Activated CD4-positive, alpha-beta T cell treated with anti-CD3 and anti-CD28 coated beads for 36 hours (primary cell): ENCODE measurements at regions of chr3 and their contacts with region 1.

Region 1: DNA sequence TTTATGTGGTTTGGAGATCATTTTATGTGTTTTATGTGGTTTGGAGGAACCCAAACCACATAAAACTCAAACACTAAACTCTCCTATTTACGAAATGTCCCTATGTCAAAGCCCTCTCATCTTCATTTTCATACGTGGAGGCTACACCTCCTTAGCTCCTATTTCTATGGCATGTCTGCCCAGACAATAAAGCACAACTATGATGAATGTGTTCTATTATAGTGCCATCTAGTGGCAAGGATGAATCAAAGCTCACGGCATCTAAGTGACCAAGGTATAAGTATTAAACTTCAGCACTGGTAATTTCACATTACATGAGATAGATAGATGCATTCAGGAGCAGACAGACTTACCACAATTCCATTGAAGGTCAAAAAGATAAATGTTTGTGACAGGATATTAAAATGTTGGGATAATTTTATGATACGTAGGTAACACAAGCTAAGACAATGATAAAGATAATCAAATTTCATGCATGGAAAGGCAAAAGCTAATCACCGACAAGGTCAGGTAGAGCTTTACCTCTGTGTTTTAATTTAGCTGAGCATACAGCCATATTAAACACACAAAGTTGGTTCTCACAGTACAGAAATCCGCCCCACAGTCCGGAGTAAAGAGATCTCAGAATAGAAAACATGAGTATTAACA is 130.6 kb upstream of the FHIT start:
- DNase-seq: no peak
- ATAC-seq: peak; percentile 87
- H3K4me3 Mint-ChIP-seq: no peak overlapping the region
- H3K27ac Mint-ChIP-seq: no peak overlapping the region
- H3K4me1 Mint-ChIP-seq: peaks cover 3% of the 10 kb centered on the region
- H3K27me3 Mint-ChIP-seq: peaks cover 17% of the 10 kb centered on the region

Region 2: GRCh38 chr3:61146010-61146890 is 235.6 kb before region 1 on chr3:
- CTCF ChIA-PET with region 1: no interaction called
- POLR2A ChIA-PET with region 1: no interaction called
- intact Hi-C with region 1: no loop called
- DNase-seq: no peak
- ATAC-seq: no peak
- H3K4me3 Mint-ChIP-seq: no peak overlapping the region
- H3K27ac Mint-ChIP-seq: no peak overlapping the region
- H3K4me1 Mint-ChIP-seq: no peaks in the 10 kb centered on the region
- H3K27me3 Mint-ChIP-seq: peaks cover 2% of the 10 kb centered on the region

Region 3: DNA sequence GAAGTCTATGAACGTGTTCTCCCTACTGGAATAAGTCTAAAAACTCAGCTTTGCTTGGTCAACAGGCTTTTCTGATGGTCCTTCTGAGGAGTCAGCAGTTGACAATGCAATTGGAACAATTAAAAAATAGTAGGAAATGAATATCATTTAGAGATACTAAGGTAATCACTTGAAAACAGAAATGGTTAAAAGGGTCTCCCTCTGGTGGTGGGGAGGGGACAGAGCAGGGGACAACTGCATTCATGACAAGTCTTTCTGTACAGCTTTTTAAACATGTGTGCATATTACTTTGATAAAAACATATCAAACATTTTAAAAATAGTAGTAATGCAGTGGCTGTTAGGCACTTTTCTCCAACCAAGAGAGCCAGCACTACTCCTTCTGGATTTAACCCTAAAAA is 10.7 kb before region 1 on chr3:
- CTCF ChIA-PET with region 1: interaction called, 10 read pairs
- POLR2A ChIA-PET with region 1: no interaction called
- intact Hi-C with region 1: no loop called
- DNase-seq: peak; percentile 51
- ATAC-seq: no peak
- H3K4me3 Mint-ChIP-seq: no peak overlapping the region
- H3K27ac Mint-ChIP-seq: no peak overlapping the region
- H3K4me1 Mint-ChIP-seq: no peaks in the 10 kb centered on the region
- H3K27me3 Mint-ChIP-seq: no peaks in the 10 kb centered on the region

Region 4: DNA sequence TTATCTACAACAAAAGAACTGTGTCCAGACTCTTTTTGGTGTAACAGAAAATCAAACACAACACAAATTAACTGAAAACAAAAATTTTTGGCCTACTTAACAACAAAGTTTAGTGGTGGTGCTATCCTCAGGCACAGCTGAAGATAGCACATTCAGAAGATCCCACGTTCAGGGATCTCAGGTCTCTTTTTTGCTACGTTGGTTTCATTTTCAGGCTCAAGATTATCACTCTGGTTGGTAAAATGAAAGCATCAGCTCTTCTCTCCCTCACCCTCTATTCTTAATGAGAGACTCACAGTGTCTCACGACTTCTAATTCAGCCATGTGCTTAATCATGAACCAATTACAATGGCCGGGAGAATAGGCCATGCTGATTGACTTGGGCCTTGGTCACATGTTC is 32.6 kb after region 1 on chr3:
- CTCF ChIA-PET with region 1: no interaction called
- POLR2A ChIA-PET with region 1: no interaction called
- intact Hi-C with region 1: no loop called
- DNase-seq: no peak
- ATAC-seq: no peak
- H3K4me3 Mint-ChIP-seq: no peak overlapping the region
- H3K27ac Mint-ChIP-seq: no peak overlapping the region
- H3K4me1 Mint-ChIP-seq: no peaks in the 10 kb centered on the region
- H3K27me3 Mint-ChIP-seq: peaks cover 10% of the 10 kb centered on the region